ENCODE measurements at regions of chr1 and their contacts with region 1.

Region 1: DNA sequence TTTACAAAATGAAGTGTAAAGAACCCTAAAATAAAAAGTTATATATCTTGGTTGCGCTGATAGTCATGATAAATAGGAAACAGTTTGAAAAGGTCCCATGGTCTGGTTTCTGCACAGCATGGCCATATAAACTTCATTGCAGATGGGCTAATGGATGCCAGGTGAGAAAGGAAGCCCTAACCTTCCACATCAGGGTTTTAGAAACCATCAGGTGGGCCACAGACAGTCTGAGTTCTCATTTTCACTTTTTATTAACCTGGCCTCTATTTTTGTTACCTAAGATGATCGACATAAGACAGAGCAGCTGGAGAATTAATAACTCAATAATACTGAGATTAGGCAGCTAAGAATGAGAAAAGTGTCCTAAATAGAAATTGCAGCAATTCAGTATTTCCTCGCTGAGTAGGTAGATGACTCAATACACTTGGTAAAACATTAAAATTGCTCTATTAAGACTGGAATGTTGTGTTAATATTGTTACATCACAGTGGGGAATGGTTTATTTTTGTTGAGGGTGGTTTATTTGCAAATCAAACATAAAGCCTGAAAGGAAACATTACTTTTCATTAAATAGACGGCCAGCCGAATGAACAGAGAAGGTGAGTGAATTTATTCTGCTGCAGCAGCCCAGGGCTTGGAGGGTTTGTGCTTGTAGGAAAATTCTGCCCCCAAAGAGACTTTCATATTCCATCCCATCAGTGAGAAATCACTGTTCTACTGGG is 21.1 kb downstream of the C1orf21 start:
- DNase-seq: no peak
- ATAC-seq: peak; percentile 48

Region 2: GRCh38 chr1:182839209-182840065 is 1568.5 kb before region 1 on chr1 and contains the start of gene DHX9:
- intact Hi-C with region 1: loop called (anchors 5 kb)
- DNase-seq: peak; percentile 97
- ATAC-seq: peak; percentile 95
- total RNA-seq, gene DHX9: 127 TPM